Endothelial cell of umbilical vein (primary cell): ENCODE measurements at regions of chr21 and their contacts with region 1.

Region 1: DNA sequence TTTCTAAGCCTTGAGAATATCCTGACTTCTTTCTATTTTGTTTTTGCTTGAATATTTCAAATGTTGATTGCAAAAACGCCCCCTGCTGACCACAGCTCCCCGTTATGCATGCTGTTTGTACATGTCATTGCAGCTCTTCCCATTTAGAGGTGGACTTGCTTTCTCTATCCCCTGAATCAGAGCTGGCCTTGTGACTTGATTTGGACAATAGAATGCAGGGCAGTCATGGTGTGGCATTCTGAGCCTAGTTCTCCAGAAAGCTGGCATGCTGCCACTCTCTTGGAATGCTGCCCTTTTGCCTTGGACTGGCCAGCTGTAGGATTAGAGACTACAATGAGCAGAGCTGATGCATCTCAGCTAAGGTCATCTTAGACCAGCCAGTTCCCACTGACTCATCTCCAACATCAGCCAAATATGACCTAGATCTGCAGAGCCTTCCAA is 1561.5 kb downstream of the MRPL39 start:
- DNase-seq: peak; percentile 98
- H3K4me3 ChIP-seq: no peak overlapping the region
- H3K27ac ChIP-seq: peak overlapping the region; percentile 55
- H3K4me1 ChIP-seq: peaks cover 15% of the 10 kb centered on the region
- H3K27me3 ChIP-seq: no peaks in the 10 kb centered on the region
- CTCF ChIP-seq: peak; percentile 44 to 46
- POLR2A ChIP-seq: no peak

Region 2: GRCh38 chr21:23162198-23162946 is 883.4 kb before region 1 on chr21:
- CTCF ChIA-PET with region 1: no interaction called
- POLR2A ChIA-PET with region 1: no interaction called
- dilution Hi-C with region 1: no loop called
- intact Hi-C with region 1: loop called (anchors 5 kb)
- DNase-seq: peak; percentile 94
- H3K4me3 ChIP-seq: no peak overlapping the region
- H3K27ac ChIP-seq: peak overlapping the region; percentile 89
- H3K4me1 ChIP-seq: peaks cover 18% of the 10 kb centered on the region
- H3K27me3 ChIP-seq: no peaks in the 10 kb centered on the region
- CTCF ChIP-seq: no peak
- POLR2A ChIP-seq: no peak

Region 3: GRCh38 chr21:23445307-23445706 is 600.5 kb before region 1 on chr21:
- CTCF ChIA-PET with region 1: no interaction called
- POLR2A ChIA-PET with region 1: no interaction called
- dilution Hi-C with region 1: no loop called
- intact Hi-C with region 1: no loop called
- DNase-seq: no peak
- H3K4me3 ChIP-seq: no peak overlapping the region
- H3K27ac ChIP-seq: no peak overlapping the region
- H3K4me1 ChIP-seq: no peaks in the 10 kb centered on the region
- H3K27me3 ChIP-seq: no peaks in the 10 kb centered on the region
- CTCF ChIP-seq: no peak
- POLR2A ChIP-seq: no peak

Region 4: DNA sequence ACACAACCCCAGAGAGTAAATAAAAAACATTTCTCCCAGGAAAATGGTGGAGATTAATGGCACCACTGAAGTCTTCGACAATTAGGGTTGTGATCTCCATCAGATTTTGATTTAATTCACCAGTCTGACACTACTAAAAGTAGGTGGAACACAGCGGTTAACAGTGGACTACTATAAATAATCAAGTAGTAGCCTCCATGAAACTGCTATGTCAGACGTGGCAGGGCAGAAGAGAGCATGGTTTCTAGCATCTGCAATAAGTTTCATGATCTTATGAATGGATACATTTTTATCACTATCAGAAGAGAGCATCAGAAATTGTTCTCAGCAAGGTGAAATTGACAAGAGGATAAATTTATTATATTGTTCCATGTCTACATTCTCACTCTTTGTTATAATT is 145.1 kb before region 1 on chr21:
- CTCF ChIA-PET with region 1: no interaction called
- POLR2A ChIA-PET with region 1: no interaction called
- dilution Hi-C with region 1: no loop called
- intact Hi-C with region 1: loop called (anchors 1 kb)
- DNase-seq: no peak
- H3K4me3 ChIP-seq: no peak overlapping the region
- H3K27ac ChIP-seq: no peak overlapping the region
- H3K4me1 ChIP-seq: no peaks in the 10 kb centered on the region
- H3K27me3 ChIP-seq: no peaks in the 10 kb centered on the region
- CTCF ChIP-seq: no peak
- POLR2A ChIP-seq: no peak

Region 5: DNA sequence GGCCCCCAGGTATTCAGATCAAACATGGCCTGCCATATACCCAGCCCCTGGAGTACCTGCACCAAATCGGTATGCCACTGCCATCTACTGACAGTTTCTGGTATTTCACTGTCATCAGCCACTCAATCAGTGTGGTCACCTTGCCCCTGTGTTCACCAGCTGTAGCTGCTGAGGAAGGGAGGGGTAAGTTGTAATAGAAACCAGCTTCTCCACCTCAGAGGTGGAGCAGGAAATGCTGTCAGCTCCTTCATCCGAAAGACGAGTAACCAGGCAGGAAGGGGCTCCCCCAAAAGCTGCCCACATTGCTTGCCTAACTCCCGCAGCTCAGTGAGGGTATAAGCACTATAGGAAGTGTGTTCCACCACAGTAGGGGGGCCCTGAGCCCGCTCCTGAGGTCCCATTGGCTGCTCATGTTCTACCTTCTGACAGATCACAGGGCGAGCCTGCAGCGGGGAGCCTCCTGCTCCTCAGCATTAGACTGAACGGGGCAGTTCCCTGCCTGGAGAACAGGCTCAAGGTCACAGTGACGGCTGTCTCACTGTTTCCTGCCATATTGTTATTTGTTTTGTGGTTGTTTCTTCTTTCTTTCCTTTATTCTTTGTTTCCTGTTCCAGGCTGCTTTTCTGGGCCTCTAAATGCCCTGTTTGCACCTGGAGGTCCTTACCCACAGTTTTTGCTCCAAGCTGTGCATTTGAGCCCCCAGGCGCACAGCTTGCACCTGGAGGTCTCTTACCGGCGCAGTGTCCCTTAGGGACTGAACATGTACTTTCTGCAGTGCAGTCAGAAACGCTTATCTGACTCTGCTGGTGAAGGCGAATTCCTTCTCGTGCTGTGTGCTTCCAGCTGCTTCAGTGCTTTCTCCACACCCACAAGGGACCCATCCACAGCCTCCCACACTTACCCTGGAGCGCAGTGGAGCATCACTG is 76.8 kb before region 1 on chr21:
- CTCF ChIA-PET with region 1: interaction called, 13 read pairs
- POLR2A ChIA-PET with region 1: no interaction called
- dilution Hi-C with region 1: no loop called
- intact Hi-C with region 1: loop called (anchors 1 kb)
- DNase-seq: peak; percentile 51
- H3K4me3 ChIP-seq: no peak overlapping the region
- H3K27ac ChIP-seq: no peak overlapping the region
- H3K4me1 ChIP-seq: no peaks in the 10 kb centered on the region
- H3K27me3 ChIP-seq: no peaks in the 10 kb centered on the region
- CTCF ChIP-seq: peak; percentile 33 to 55
- POLR2A ChIP-seq: no peak

Region 6: DNA sequence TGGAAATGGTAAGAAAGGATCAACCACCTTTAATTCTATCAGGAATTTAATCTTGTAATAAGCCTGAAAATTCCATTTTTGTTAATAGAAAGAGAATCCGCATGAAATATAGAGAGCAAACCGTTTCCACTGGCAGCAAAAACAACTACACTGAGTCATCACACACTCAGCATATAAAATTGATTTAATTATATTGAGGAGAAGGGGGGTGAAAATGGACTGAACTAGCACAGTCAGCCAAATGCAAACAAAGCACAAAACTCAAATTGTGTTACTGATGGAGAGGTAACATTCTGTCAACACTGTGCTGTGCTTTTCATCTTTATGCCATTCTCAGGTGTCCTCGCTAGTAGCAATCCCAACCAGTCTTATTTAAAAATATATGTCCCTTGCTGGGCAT is 22.4 kb before region 1 on chr21:
- CTCF ChIA-PET with region 1: interaction called, 17 read pairs
- POLR2A ChIA-PET with region 1: interaction called, 3 read pairs
- dilution Hi-C with region 1: no loop called
- intact Hi-C with region 1: loop called (anchors 1 kb)
- DNase-seq: peak; percentile 9
- H3K4me3 ChIP-seq: no peak overlapping the region
- H3K27ac ChIP-seq: no peak overlapping the region
- H3K4me1 ChIP-seq: no peaks in the 10 kb centered on the region
- H3K27me3 ChIP-seq: no peaks in the 10 kb centered on the region
- CTCF ChIP-seq: no peak
- POLR2A ChIP-seq: no peak